ENCODE measurements at regions of chr14 and their contacts with region 1.

Region 1: GRCh38 chr14:94689218-94689984 is 77.2 kb downstream of the SERPINA3 start:
- DNase-seq: peak; percentile 62 to 88 (median 78)
- H3K4me3 ChIP-seq: no peak overlapping the region
- H3K27ac ChIP-seq: no peak overlapping the region
- H3K4me1 ChIP-seq: no peaks in the 10 kb centered on the region
- H3K27me3 ChIP-seq: no peaks in the 10 kb centered on the region
- CTCF ChIP-seq: peak; percentile 90 to 92 (median 92)
- EP300 ChIP-seq: no peak
- POLR2A ChIP-seq: no peak

Region 2: GRCh38 chr14:94203473-94204210 is 485.8 kb before region 1 on chr14:
- intact Hi-C with region 1: loop called in 1 of 4 experiments (anchors 10 kb)
- DNase-seq: no peak
- H3K4me3 ChIP-seq: no peak overlapping the region
- H3K27ac ChIP-seq: no peak overlapping the region
- H3K4me1 ChIP-seq: no peaks in the 10 kb centered on the region
- H3K27me3 ChIP-seq: no peaks in the 10 kb centered on the region
- CTCF ChIP-seq: no peak
- EP300 ChIP-seq: no peak
- POLR2A ChIP-seq: no peak

Region 3: DNA sequence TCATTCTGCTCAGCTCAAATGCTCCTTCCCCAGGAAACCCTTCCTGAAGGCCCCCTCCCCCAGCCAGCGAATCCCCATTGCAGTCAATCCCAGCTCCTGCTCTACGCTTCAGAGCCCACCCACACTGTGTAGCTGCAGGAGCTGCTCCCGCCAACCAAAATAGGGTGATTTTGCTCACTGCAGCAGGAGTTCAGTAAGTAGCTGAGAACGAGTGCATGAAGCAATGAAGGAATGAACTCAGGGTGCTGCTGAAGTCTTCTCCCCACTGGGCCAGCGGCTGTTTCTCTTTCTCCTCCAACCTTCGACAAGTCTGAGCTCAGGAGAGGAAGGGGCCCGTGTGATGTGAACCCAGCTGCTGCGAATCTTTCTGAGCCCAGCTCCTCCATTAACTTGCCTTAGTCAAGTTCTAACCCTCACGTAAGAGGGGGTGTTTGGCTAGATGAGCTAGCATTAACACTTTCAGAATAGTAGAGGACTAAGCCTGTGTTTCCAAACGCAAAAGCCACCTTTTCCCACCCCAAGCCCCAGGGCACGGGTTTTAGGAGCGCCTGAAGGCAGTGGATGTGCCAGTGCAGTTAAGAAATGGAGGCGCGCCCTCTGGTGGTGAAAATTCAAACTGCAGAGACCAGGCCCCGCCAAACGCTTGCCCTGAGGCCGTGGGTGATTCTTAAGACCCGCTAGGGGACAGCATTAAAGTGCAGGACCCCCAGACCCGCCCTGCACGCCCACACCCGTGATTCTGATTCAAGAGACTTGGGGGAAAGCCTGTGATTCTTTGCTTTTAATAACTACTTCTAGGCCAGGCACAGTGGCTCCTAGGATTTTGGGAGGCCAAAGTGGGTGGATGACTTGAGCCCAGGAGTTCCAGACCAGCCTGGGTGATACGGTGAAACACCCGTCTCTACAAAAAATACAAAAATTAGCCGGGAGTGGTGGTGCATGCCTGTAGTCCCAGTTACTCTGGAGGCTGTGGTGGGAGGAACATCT is 140.1 kb before region 1 on chr14:
- intact Hi-C with region 1: loop called in 1 of 4 experiments (anchors 10 kb)
- DNase-seq: peak; percentile 61 to 85 (median 79)
- H3K4me3 ChIP-seq: no peak overlapping the region
- H3K27ac ChIP-seq: no peak overlapping the region
- H3K4me1 ChIP-seq: no peaks in the 10 kb centered on the region
- H3K27me3 ChIP-seq: no peaks in the 10 kb centered on the region
- CTCF ChIP-seq: peak; percentile 77 to 91 (median 79)
- EP300 ChIP-seq: no peak
- POLR2A ChIP-seq: no peak

Region 4: DNA sequence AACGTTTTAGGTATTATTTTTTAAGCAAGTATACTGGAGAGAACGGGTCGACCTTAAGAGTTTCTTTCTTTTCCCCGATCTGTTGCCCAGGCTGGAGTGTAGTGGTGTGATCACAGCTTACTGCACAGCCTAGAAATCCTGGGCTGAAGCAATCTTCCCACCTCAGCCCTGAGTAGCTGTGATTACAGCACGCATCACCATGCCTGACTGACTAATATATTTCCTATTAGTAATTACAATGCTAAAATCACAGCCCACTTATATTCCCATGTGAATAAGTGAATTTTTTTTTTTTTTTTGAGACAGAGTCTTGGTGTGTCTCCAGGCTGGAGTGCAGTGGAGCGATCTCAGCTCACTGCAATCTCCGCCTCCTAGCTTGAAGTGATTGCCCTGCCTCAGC is 417.6 kb after region 1 on chr14:
- intact Hi-C with region 1: loop called in 1 of 4 experiments (anchors 10 kb)
- DNase-seq: no peak
- H3K4me3 ChIP-seq: no peak overlapping the region
- H3K27ac ChIP-seq: no peak overlapping the region
- H3K4me1 ChIP-seq: peaks cover 3% of the 10 kb centered on the region
- H3K27me3 ChIP-seq: no peaks in the 10 kb centered on the region
- CTCF ChIP-seq: no peak
- EP300 ChIP-seq: no peak
- POLR2A ChIP-seq: no peak

Region 5: DNA sequence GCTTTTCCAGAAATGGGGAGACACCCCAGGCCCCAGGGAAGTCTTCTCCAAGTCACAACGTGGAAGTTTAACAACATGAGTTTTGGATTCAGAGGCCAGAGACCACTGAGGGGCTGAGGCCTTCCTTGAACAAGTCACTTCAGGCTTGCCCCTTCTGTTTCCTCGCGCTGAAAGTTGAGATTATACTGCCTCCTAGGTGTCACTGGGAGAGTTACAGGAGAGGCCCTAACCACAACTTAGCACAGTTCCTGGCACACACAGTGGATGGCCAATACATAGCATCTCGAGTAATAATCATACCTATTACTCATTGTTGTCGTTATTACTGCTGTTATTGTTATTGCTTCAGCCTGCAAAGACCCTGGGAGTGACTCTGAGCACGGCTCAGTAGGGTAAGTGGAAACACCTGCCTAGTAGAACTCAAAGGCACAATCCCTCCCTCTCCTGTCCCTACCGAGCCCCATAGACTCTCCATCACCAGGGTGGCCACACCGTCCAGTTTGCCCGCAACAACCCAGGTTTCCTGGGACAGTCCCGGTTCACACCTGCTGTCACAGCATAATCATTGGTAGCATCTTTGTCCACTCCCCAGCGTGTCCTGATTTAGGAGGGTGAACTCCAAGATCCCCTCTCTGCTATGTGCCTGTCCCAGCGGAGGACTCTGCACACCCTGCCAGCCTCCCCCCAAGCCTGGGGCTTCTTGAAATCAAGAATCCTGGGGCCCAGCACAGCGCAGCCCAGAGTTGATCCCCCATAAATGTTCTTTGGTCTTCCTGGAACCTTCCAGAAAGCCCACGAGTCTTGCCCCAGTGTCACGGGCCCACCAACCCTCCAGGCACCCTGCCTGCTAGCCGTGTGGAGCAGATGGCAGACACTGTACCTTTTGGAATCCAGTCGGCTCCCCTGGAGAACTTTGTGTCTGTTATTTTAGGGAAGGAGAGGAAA is 742.1 kb after region 1 on chr14:
- intact Hi-C with region 1: loop called (anchors 5 to 10 kb)
- DNase-seq: no peak
- H3K4me3 ChIP-seq: no peak overlapping the region
- H3K27ac ChIP-seq: no peak overlapping the region
- H3K4me1 ChIP-seq: no peaks in the 10 kb centered on the region
- H3K27me3 ChIP-seq: no peaks in the 10 kb centered on the region
- CTCF ChIP-seq: peak in 1 of 3 donors; percentile 25
- EP300 ChIP-seq: no peak
- POLR2A ChIP-seq: no peak